ENCODE measurements at regions of chr11 and their contacts with region 1.

Region 1: DNA sequence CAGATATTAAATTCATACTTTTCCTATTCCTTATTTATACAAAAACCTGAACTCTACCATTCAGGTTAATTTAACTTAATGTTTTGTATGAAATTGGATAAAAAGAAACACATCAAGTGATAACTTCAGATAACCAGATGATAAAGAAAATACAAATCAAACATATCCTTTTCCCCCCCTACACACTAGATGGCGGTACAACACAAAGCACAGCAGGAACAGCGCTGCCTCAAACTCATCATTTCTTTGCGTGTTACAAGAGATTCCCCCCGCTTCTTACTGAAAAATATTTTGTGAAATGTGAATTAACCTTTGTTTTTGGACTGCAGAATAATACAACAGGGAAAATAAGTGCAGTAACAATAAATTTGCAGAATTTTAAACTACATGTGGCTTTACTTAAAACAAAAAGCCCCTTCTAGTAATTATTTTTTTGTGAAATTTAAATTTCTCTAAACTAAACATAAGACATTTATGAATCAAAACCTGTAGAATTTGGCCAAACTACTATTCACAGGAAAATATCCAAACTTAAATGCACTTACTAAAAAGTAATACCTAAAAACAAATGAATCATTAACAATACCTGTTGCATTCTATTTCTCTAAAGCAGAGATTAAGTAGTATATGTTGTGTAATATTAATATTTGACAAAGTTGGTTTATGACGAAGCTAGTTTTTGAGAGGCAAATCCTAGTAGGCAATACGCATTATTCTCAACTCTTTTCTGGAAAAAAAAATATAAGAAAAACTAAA is 74.4 kb downstream of the ARHGAP32 start:
- DNase-seq: peak; percentile 82
- ATAC-seq: peak; percentile 54
- H3K4me3 ChIP-seq: no peak overlapping the region
- H3K27ac ChIP-seq: no peak overlapping the region
- H3K4me1 ChIP-seq: peaks cover 5% of the 10 kb centered on the region; the same call in 1 of the 2 replicates
- H3K27me3 ChIP-seq: no peaks in the 10 kb centered on the region
- CTCF ChIP-seq: peak; percentile 99
- POLR2A ChIP-seq: peak; percentile 45; the same call in 1 of the 2 replicates
- RAD21 ChIP-seq: peak; percentile 100

Region 2: GRCh38 chr11:128884703-128885338 is 233.0 kb before region 1 on chr11:
- CTCF ChIA-PET with region 1: no interaction called
- POLR2A ChIA-PET with region 1: no interaction called
- dilution Hi-C with region 1: no loop called
- in situ Hi-C with region 1: no loop called
- intact Hi-C with region 1: loop called (anchors 1 kb)
- DNase-seq: peak; percentile 69
- ATAC-seq: peak; percentile 88
- H3K4me3 ChIP-seq: no peak overlapping the region
- H3K27ac ChIP-seq: no peak overlapping the region
- H3K4me1 ChIP-seq: no peaks in the 10 kb centered on the region
- H3K27me3 ChIP-seq: peaks cover 66% of the 10 kb centered on the region
- CTCF ChIP-seq: peak; percentile 93
- POLR2A ChIP-seq: peak; percentile 46; the same call in 1 of the 2 replicates
- RAD21 ChIP-seq: peak; percentile 97

Region 3: GRCh38 chr11:129089279-129089678 is 28.5 kb before region 1 on chr11:
- CTCF ChIA-PET with region 1: no interaction called
- POLR2A ChIA-PET with region 1: no interaction called
- dilution Hi-C with region 1: no loop called
- in situ Hi-C with region 1: no loop called
- intact Hi-C with region 1: no loop called
- DNase-seq: no peak
- ATAC-seq: no peak
- H3K4me3 ChIP-seq: no peak overlapping the region
- H3K27ac ChIP-seq: no peak overlapping the region
- H3K4me1 ChIP-seq: no peaks in the 10 kb centered on the region
- H3K27me3 ChIP-seq: no peaks in the 10 kb centered on the region
- CTCF ChIP-seq: no peak
- POLR2A ChIP-seq: no peak
- RAD21 ChIP-seq: no peak

Region 4: DNA sequence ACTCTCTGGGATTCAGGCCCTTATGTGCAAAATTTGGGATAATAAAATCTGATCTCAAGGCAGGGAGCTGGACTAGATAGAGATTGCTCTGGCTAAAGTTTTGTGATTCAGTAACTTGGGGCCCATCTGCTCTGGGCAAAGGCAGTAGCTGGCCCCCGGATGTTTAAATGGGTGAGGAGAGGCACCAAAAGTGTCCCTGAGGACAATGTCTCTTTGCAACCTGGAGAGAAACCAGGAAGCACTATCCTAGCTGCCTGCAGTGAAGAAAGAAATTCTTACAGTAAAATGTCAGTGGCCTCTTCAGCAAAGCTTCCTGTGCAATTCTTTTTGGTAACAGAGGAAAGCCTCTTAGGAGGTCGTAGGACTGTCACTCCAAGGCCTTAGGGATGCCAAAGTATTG is 203.3 kb after region 1 on chr11:
- CTCF ChIA-PET with region 1: no interaction called
- POLR2A ChIA-PET with region 1: no interaction called
- dilution Hi-C with region 1: no loop called
- in situ Hi-C with region 1: no loop called
- intact Hi-C with region 1: no loop called
- DNase-seq: no peak
- ATAC-seq: no peak
- H3K4me3 ChIP-seq: no peak overlapping the region
- H3K27ac ChIP-seq: no peak overlapping the region
- H3K4me1 ChIP-seq: 0 out of 2 replicates have a peak, but pooled peaks cover 2% of the 10 kb centered on the region
- H3K27me3 ChIP-seq: peaks cover 7% of the 10 kb centered on the region
- CTCF ChIP-seq: no peak
- POLR2A ChIP-seq: no peak
- RAD21 ChIP-seq: no peak

Region 5: GRCh38 chr11:129331871-129332274 is 214.1 kb after region 1 on chr11:
- CTCF ChIA-PET with region 1: interaction called, 24 read pairs
- POLR2A ChIA-PET with region 1: no interaction called
- dilution Hi-C with region 1: no loop called
- in situ Hi-C with region 1: loop called (anchors 5 kb)
- intact Hi-C with region 1: loop called (anchors 1 kb)
- DNase-seq: peak; percentile 69
- ATAC-seq: peak; percentile 99
- H3K4me3 ChIP-seq: no peak overlapping the region
- H3K27ac ChIP-seq: no peak overlapping the region
- H3K4me1 ChIP-seq: no peaks in the 10 kb centered on the region
- H3K27me3 ChIP-seq: no peaks in the 10 kb centered on the region
- CTCF ChIP-seq: peak; percentile 92
- POLR2A ChIP-seq: no peak
- RAD21 ChIP-seq: peak; percentile 97

Region 6: DNA sequence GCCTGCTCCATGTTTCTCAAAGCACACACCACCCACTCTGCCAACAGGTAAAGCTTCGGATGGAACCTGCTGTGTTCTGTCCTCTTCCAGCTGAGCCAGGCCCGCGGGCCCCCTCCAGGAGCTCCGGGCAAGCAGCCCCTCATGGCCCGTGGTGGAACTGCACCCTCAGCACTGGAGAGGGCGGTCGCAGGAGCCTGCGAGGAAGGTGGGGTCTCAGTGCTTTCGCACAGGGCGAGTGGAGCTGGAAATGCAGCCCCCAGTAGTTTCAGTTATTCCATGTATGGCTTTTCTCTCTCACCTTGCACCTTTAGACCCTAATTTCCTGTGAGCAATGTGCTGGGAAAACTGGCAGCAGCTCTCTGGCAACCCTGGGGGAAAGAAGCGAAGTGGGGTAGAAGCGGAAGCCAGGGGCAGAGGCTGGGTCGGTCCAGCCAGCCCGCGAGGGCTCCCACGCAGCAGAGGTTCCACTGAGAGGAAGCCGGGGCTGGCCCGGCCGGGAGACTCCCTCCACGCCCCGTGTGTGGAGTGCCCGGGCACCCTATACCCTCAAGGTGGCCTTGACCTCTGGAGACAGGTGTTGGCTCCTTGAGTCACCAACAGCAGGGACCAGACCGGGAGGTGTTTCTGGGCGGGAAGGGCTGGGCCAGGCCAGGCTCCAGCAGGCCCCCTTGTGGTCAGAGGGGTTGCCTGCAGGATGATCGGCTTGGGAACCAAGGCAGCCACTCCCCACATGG is 578.0 kb after region 1 on chr11:
- CTCF ChIA-PET with region 1: no interaction called
- POLR2A ChIA-PET with region 1: no interaction called
- dilution Hi-C with region 1: no loop called
- in situ Hi-C with region 1: no loop called
- intact Hi-C with region 1: loop called (anchors 2 kb)
- DNase-seq: peak; percentile 13
- ATAC-seq: peak; percentile 93
- H3K4me3 ChIP-seq: no peak overlapping the region
- H3K27ac ChIP-seq: no peak overlapping the region
- H3K4me1 ChIP-seq: no peaks in the 10 kb centered on the region
- H3K27me3 ChIP-seq: peaks cover 14% of the 10 kb centered on the region
- CTCF ChIP-seq: peak; percentile 61
- POLR2A ChIP-seq: no peak
- RAD21 ChIP-seq: peak; percentile 65

Region 7: DNA sequence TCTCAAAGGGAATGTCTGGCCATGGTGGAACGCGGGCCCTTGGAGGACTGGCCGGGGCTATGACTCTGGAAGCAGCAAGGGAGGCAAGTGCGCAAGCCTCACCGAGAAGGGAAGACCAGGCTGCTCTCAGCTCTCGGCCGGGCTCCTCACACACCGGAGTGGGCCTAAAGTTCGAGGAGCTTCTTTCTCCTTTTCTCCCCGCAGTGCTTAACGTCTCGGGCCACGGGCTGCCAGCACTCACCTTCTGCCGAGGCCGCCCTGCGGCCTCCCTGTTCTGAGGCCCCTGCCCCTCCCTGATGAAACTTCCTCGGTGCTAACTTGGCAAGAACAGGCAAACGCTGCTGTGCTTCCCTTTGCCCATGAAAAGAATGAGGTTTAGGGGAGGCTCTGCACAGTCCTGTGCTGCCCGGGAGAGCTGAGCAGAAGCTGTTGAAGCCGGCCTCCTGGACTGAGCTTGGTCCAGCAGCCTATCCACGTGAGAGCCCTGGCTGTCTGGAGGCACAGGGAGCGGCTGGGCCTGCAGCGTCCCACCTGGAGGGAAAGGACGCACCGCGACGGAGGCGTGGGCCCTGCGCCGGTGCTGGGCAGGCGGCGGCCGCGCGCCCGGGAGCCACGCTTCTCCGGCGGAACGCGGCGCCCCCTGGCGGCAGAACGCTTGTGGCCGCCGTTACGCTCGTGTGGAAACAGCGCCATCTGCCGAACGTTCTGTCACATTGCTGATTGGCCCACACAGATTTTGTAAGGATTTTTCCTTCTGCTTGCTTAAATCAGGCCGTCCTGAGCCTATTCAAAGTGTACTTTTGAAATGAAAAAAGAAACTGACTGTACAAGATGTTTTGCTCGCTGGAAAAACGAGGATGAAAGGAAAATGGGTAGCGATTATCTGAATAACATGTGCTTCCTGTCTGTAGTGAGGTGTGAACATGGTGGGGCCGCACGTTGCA is 632.8 kb after region 1 on chr11:
- CTCF ChIA-PET with region 1: interaction called, 6 read pairs
- POLR2A ChIA-PET with region 1: no interaction called
- dilution Hi-C with region 1: no loop called
- in situ Hi-C with region 1: loop called (anchors 25 kb)
- intact Hi-C with region 1: loop called (anchors 1 kb)
- DNase-seq: peak; percentile 67
- ATAC-seq: peak; percentile 94
- H3K4me3 ChIP-seq: no peak overlapping the region
- H3K27ac ChIP-seq: no peak overlapping the region
- H3K4me1 ChIP-seq: no peaks in the 10 kb centered on the region
- H3K27me3 ChIP-seq: peaks cover 17% of the 10 kb centered on the region
- CTCF ChIP-seq: peak; percentile 100
- POLR2A ChIP-seq: no peak
- RAD21 ChIP-seq: peak; percentile 94